ENCODE measurements at regions of chr10 and their contacts with region 1.

Region 1: GRCh38 chr10:118754720-118755480 is at the start of gene CACUL1:
- DNase-seq: peak; percentile 99 to 100
- H3K4me3 ChIP-seq: peak within 1 kb of the TSS; percentile 95 to 100
- H3K27ac ChIP-seq: peak within 1 kb of the TSS; percentile 77 to 79
- H3K4me1 ChIP-seq: peaks cover 4 to 19% of the 10 kb centered on the region in 2 donors
- H3K27me3 ChIP-seq: no peaks in the 10 kb centered on the region
- CTCF ChIP-seq: no peak
- total RNA-seq, gene CACUL1: 23.6 TPM

Region 2: DNA sequence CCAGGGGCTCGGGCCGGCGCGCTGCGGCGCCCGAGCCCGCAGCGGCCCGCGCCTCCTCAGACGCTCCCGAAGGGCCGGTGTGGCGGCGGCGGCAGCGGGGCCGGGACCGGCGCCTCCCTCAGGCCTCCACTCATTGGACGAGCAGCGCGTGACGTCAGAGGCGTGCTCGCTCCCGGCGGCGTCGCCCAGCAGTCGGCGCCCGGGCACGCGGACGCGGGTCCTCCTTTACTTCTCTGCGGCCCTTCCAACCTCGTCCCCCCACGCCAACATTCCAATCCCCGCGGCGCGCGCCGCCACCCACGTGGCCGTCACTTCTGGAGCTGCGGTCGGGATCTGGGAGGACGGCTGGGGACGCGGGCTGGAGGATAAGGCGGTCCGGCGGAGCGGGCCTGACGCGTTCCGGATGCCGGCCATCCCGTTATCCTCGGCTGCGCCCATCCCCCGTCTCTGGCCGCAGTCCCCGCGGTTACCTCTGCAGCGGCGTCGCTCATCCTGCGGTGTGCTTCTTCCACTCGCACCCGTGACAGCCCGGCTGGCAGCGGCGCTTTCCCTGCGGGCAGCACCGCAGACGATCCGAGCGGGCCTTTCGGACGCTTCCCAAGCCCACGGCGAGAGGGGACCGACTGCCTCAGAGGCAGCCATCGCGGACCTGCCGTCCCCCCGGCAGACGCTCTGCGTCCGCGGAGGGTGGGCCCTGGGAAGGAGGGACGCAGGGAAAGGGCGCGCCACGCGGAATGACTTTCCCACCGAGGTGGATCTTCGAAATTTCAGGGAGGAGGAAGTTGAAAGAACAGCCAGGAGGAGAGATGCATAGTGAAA is 1379.3 kb before region 1 on chr10 and contains the start of gene PDZD8:
- intact Hi-C with region 1: loop called (anchors 10 kb)
- DNase-seq: peak; percentile 68 to 96
- H3K4me3 ChIP-seq: peak within 1 kb of the TSS; percentile 92 to 96
- H3K27ac ChIP-seq: peak within 1 kb of the TSS; percentile 96 to 97
- H3K4me1 ChIP-seq: peaks cover 0 to 13% of the 10 kb centered on the region in 2 donors
- H3K27me3 ChIP-seq: no peaks in the 10 kb centered on the region
- CTCF ChIP-seq: no peak
- total RNA-seq, gene PDZD8: 21.0 TPM

Region 3: DNA sequence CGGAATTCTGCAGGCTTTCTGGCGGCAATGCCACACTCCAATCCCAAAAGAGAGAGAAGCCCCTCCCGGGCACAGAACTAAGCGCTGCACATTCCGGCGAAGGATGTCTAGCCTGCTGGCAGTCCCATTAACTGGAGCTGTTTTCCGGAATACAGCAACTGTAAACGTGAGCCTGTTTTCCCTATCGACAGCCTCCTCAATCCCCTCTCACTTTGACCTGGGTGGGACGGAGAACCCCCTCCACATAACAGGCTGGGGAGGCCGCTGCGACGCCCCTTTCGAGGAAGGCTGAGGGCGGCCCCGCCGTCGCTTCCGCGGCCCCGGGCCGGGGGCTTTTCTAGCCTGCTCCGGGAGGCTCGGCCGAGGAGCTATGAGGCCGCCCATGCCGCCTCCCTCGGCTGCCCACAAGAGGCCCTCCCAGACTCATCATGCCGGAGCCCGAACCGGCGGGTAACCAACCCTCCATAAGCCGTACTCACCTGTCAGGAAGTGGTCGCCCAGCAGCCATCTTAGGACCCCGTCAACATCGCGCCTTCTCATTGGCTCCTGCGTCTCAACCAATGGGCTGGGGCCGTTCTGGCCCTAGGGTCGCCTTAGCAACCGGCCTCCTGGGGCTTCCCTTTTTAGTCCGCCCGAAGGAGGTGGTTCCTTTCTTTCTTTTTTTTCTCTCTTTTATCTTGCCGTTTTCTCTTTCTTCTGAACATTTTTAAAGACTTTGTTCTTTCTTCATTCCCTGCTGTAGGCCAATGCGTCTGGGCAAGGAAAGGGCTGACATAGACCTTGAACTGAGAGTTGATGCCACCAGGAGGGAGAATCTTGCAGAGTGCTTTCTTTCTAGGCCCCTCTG is 412.9 kb before region 1 on chr10 and contains the start of gene FAM204A:
- intact Hi-C with region 1: loop called (anchors 10 kb)
- DNase-seq: peak; percentile 78 to 97
- H3K4me3 ChIP-seq: peak within 1 kb of the TSS; percentile 77 to 93
- H3K27ac ChIP-seq: peak within 1 kb of the TSS; percentile 51 to 77
- H3K4me1 ChIP-seq: peaks cover 0 to 11% of the 10 kb centered on the region in 2 donors
- H3K27me3 ChIP-seq: no peaks in the 10 kb centered on the region
- CTCF ChIP-seq: no peak
- total RNA-seq, gene FAM204A: 12.5 TPM

Region 4: DNA sequence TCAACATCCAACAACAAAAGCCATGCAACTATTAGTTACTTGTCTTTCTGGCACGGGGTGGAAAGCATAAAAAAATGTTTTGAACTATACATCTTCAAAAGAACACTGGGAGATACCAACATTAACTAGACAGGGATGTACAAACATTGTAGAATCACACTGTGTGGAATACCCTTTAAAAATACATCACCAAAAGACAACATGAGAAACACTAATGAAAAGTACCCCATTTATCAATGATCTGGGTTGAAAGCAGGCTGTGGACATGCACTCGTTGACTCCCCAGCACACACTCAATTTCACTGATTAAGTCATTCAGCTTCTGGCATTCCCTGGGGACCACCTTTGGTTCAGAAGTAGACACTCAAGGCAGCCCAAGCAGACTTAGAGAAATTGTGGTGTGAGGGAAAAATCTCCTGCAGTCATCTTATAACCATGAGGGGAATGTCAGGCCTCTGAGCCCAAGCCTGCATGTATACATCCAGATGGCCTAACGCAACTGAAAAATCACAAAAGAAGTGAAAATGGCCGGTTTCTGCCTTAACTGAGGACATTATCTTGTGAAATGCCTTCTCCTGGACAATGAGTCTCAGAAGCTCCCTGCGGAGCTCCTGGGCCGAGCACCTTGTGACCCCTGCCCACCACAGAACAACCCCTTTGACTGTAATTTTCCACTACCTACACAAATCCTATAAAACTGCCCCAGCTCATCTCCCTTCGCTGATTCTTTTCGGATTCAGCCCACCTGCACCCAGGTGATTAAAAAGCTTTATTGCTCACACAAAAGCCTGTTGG is 53.2 kb before region 1 on chr10:
- intact Hi-C with region 1: no loop called
- DNase-seq: no peak
- H3K4me3 ChIP-seq: no peak overlapping the region
- H3K27ac ChIP-seq: no peak overlapping the region
- H3K4me1 ChIP-seq: no peaks in the 10 kb centered on the region
- H3K27me3 ChIP-seq: no peaks in the 10 kb centered on the region
- CTCF ChIP-seq: no peak

Region 5: GRCh38 chr10:118720685-118721538 is 34.0 kb before region 1 on chr10:
- intact Hi-C with region 1: no loop called
- DNase-seq: peak in 1 of 2 donors; percentile 79
- H3K4me3 ChIP-seq: no peak overlapping the region
- H3K27ac ChIP-seq: no peak overlapping the region
- H3K4me1 ChIP-seq: peaks cover 3 to 6% of the 10 kb centered on the region in 2 donors
- H3K27me3 ChIP-seq: no peaks in the 10 kb centered on the region
- CTCF ChIP-seq: peak; percentile 43 to 86 (median 79)

Region 6: DNA sequence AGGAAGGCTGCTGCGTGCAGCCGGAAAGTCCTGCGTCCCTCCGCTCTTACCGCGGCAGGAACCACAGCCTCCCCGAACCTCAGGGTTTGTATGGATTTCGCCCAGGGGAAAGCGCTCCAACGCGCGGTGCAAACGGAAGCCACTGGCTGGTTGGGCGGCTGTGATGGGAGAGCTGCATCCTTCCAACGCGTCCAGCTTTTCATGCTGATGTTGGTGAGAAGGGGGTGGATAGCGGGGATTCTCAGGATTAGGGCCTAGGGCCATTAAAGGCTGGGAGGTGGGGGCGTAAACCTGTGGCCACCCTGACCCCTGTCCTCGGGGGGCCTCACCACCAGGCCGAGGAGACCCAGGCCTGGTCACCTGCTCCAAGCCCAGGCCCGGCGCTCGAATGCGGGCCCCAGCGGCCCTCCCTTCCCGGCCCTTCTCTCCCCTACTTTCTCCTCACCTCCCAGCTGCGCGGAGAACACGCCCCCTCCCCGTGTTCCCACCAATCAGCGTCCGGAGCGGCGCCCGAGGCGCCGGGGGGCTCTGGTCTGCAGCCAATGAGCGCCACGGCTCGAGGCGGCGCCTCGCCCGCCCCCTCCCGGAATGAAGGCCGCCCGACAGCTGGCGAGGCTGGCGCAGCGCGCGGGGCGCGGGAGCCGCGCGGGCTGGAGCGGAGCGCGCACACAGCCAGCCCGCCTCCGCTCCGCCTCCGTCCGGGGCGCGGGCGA is 274.2 kb after region 1 on chr10:
- intact Hi-C with region 1: loop called (anchors 2 kb)
- DNase-seq: peak in 1 of 2 donors; percentile 94
- H3K4me3 ChIP-seq: peak overlapping the region; percentile 73 to 88
- H3K27ac ChIP-seq: peak overlapping the region; percentile 80 to 85
- H3K4me1 ChIP-seq: peaks cover 20 to 30% of the 10 kb centered on the region in 2 donors
- H3K27me3 ChIP-seq: no peaks in the 10 kb centered on the region
- CTCF ChIP-seq: peak in 2 of 3 experiments; percentile 27 to 30

Region 7: GRCh38 chr10:119596537-119597404 is 841.9 kb after region 1 on chr10 and contains the start of gene TIAL1:
- intact Hi-C with region 1: loop called (anchors 10 kb)
- DNase-seq: peak; percentile 97 to 99
- H3K4me3 ChIP-seq: peak within 1 kb of the TSS; percentile 64 to 70
- H3K27ac ChIP-seq: peak within 1 kb of the TSS; percentile 95 to 98
- H3K4me1 ChIP-seq: peaks cover 0 to 31% of the 10 kb centered on the region in 2 donors
- H3K27me3 ChIP-seq: no peaks in the 10 kb centered on the region
- CTCF ChIP-seq: no peak
- total RNA-seq, gene TIAL1: 35.5 TPM